A549 (cell line): ENCODE measurements at regions of chr1 and their contacts with region 1.

Region 1: DNA sequence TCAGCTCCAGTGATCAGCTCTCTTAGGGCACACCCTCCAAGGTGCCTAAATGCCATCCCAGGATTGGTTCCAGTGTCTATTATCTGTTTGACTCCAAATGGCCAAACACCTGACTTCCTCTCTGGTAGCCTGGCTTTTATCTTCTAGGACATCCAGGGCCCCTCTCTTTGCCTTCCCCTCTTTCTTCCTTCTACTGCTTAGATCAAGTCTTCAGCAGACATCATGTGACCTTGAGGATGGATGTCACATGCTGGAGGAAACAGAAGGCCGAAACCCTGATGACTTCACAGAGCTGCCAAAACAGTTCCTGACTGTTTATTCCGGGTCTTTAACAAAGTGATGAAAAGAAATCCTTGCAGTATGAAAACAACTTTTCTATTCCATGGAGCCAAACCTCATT is 24.4 kb upstream of the WDR26 start:
- DNase-seq: no peak
- ATAC-seq: no peak
- H3K4me3 ChIP-seq: no peak overlapping the region
- H3K27ac ChIP-seq: no peak overlapping the region
- H3K4me1 ChIP-seq: peaks cover 9% of the 10 kb centered on the region
- CTCF ChIP-seq: no peak
- EP300 ChIP-seq: no peak
- POLR2A ChIP-seq: no peak
- RAD21 ChIP-seq: no peak

Region 2: GRCh38 chr1:224329842-224330753 is 128.9 kb before region 1 on chr1 and contains the start of gene NVL:
- CTCF ChIA-PET with region 1: interaction called, 12 read pairs
- POLR2A ChIA-PET with region 1: no interaction called
- DNase-seq: peak; percentile 91 to 92
- ATAC-seq: peak; percentile 97
- H3K4me3 ChIP-seq: peak within 1 kb of the TSS; percentile 80
- H3K27ac ChIP-seq: peak within 1 kb of the TSS; percentile 92 to 95
- H3K4me1 ChIP-seq: peaks cover 13% of the 10 kb centered on the region
- CTCF ChIP-seq: no peak
- EP300 ChIP-seq: no peak
- POLR2A ChIP-seq: peak; percentile 38; the same call in 1 of the 2 replicates
- RAD21 ChIP-seq: no peak; a peak in 2 of 5 replicates
- polyA plus RNA-seq, gene NVL: 20.7 and 28.6 TPM in 2 replicates

Region 3: DNA sequence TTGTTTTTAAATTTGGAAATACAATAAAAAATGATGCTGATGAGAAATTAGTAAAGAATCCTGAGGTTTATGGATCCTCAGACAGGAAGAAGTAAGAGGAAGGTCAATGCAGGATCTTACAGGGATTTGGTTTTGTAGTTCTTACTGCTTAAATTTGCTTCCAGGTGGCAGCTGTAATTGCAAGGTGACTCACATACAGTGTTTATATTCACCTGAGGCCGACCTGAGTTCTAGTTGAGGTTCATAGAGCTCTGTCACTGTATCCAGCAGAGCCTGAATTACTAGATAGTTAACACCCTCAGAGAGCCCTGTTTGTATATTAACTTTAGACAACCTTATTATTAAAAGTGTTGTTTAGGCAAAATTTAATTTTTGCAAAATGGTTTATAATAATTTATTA is 23.0 kb before region 1 on chr1:
- CTCF ChIA-PET with region 1: interaction called, 17 read pairs
- POLR2A ChIA-PET with region 1: interaction called, 8 read pairs
- DNase-seq: no peak
- ATAC-seq: no peak
- H3K4me3 ChIP-seq: no peak overlapping the region; the same call in 2 of the 3 replicates
- H3K27ac ChIP-seq: peak overlapping the region; percentile 32 to 81; a peak in 3 of 6 replicates
- H3K4me1 ChIP-seq: peaks cover 24% of the 10 kb centered on the region
- CTCF ChIP-seq: no peak
- EP300 ChIP-seq: no peak
- POLR2A ChIP-seq: no peak
- RAD21 ChIP-seq: no peak

Region 4: GRCh38 chr1:224472806-224473205 is 13.8 kb after region 1 on chr1:
- CTCF ChIA-PET with region 1: interaction called, 22 read pairs
- POLR2A ChIA-PET with region 1: no interaction called
- DNase-seq: no peak
- ATAC-seq: no peak
- H3K4me3 ChIP-seq: no peak overlapping the region
- H3K27ac ChIP-seq: no peak overlapping the region
- H3K4me1 ChIP-seq: no peaks in the 10 kb centered on the region
- CTCF ChIP-seq: no peak
- EP300 ChIP-seq: no peak
- POLR2A ChIP-seq: no peak
- RAD21 ChIP-seq: no peak

Region 5: DNA sequence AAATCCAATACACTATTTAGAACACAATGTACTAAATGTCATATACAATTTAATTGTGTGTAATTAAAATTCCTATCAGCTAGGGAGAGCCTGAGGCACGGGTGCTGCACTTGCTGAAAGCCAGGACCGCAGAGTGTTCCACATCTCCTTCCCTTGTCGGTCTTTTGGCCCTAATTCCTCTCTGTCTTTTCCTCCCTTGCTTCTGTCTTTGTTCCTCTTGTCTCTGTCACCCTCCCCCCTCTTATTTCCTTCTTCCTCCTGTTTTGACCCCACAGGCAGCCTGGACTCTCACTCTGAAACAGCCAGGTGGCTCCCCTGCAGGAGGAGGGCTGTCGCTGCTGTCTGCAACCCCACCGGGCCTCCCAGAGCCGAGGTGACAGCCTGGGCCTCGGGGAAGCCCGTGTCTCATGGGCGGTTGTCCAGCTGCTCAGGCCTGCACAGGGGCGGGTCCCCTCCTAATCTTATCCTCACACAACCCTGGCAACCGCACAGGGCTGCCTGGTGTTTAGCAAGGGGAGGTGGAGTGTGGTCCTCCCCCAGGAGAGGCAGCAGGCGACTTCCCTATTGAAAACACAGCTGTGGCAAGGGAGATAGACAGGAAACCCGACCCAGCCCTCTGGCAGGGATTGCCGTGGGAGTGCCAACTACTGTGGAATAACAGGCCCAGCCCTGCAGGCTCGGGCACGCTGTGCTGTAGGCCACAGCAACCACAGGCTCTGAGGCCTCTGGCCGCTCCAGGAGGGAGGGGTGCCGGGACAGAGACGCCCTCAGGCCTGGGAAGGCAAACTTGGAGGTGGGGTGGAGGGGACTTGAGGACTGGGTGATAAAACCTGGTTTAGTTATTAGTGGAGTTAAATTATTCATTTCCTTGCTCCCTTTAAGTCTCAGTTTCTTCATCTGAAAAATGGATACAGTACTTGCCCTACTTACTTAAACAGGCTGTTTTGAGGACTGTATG is 44.4 kb after region 1 on chr1:
- CTCF ChIA-PET with region 1: no interaction called
- POLR2A ChIA-PET with region 1: no interaction called
- DNase-seq: peak; percentile 31 to 59
- ATAC-seq: peak; percentile 82 to 83
- H3K4me3 ChIP-seq: no peak overlapping the region
- H3K27ac ChIP-seq: peak overlapping the region; percentile 37 to 72; a peak in 5 of 6 replicates
- H3K4me1 ChIP-seq: peaks cover 13% of the 10 kb centered on the region
- CTCF ChIP-seq: no peak
- EP300 ChIP-seq: no peak
- POLR2A ChIP-seq: no peak
- RAD21 ChIP-seq: no peak

Region 6: GRCh38 chr1:224565186-224565585 is 106.2 kb after region 1 on chr1:
- CTCF ChIA-PET with region 1: no interaction called
- POLR2A ChIA-PET with region 1: no interaction called
- DNase-seq: peak; percentile 62 to 74
- ATAC-seq: peak; percentile 95 to 99
- H3K4me3 ChIP-seq: no peak overlapping the region
- H3K27ac ChIP-seq: peak overlapping the region; percentile 60 to 77
- H3K4me1 ChIP-seq: peaks cover 19% of the 10 kb centered on the region
- CTCF ChIP-seq: no peak
- EP300 ChIP-seq: no peak
- POLR2A ChIP-seq: no peak
- RAD21 ChIP-seq: no peak